Head of caudate nucleus (tissue), 42 donors: ENCODE measurements at regions of chr5 and their contacts with region 1.

Region 1: DNA sequence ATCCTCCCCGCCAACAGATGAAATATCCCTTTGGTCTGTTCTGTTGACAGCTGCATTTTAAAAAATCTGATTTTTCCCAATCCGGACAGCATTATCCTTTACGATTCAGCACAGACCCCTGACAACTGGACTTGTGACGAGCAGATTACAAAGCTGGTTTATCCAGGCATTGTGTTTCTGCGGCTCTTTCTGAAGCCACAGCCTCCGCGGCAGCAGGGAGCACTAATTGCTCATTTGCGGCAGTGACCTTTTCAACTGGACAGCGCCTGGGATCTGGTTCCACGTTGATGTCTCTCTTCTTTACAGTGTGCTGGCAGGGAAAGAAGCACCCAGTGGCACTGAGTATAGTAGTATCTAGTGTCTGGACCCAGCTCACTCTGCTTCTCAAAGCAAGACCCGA is 351.2 kb downstream of the ZNF608 start:
- DNase-seq: peak; percentile 20 to 87 (median 64)

Region 2: DNA sequence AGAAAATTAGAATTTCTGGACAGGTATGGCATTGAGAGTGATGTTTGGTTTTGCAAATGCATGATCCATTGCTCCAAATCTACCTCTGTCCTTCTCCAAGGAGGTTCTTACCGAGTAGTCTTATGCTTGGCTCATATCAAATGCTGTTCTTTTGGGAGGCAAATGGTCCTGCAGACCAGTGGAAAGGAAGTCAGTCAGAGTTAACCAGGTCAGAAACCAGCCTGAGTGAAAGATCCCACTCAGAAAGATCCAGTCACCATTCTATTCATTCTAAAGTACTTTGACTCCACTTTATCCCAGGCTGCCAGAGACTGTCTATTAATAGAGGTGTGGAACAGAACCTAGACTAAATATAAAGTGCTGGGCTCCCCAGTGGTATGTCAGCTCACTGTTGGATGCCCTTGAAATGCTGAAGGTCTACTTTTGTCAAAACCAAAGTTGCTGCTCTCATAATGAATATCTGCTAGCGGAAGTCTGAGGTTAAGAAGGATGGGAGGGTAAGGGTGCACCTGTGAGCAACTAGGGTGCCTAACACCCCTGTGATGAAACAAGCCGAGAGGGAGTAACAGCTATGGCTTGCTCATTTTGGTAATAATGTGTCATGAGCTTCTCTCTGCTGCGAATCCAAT is 49.0 kb after region 1 on chr5:
- intact Hi-C with region 1: loop called (anchors 10 kb)
- DNase-seq: no peak